GM10248 (cell line): ENCODE measurements at regions of chr11 and their contacts with region 1.

Region 1: GRCh38 chr11:119728651-119729580 is at the start of gene NECTIN1:
- DNase-seq: peak; percentile 92
- CTCF ChIP-seq: peak; percentile 81

Region 2: GRCh38 chr11:119666463-119667131 is 62.3 kb before region 1 on chr11:
- CTCF ChIA-PET with region 1: interaction called, 68 read pairs
- POLR2A ChIA-PET with region 1: no interaction called
- DNase-seq: peak; percentile 86
- CTCF ChIP-seq: peak; percentile 89

Region 3: DNA sequence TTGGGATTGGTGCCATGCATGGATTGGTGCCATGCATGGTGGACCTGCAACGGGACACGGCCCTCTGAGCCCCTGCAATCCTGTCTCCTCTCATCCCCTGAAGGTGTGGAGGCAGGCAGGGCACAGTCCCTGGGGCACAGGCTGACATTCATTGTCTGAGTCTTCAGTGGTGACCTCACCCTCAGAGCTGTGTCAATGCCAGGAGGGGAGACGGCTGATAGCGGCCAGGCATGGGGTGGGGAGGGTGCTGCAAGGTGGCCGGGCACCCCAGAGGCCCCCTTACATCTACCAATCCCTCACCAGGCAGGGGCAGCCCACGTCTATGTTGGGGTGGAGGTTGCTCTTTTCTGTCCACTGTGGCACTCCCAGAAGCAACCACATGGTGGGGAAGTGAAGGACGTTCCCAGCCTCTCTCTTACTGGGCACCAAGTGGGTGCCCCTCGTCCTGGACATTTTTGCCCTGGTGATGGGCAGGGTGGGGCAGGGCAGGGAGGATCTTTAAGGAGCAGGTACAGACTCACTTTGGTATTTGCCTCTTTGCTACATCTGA is 47.5 kb before region 1 on chr11:
- CTCF ChIA-PET with region 1: interaction called, 68 read pairs
- POLR2A ChIA-PET with region 1: interaction called, 3 read pairs
- DNase-seq: no peak
- CTCF ChIP-seq: no peak

Region 4: DNA sequence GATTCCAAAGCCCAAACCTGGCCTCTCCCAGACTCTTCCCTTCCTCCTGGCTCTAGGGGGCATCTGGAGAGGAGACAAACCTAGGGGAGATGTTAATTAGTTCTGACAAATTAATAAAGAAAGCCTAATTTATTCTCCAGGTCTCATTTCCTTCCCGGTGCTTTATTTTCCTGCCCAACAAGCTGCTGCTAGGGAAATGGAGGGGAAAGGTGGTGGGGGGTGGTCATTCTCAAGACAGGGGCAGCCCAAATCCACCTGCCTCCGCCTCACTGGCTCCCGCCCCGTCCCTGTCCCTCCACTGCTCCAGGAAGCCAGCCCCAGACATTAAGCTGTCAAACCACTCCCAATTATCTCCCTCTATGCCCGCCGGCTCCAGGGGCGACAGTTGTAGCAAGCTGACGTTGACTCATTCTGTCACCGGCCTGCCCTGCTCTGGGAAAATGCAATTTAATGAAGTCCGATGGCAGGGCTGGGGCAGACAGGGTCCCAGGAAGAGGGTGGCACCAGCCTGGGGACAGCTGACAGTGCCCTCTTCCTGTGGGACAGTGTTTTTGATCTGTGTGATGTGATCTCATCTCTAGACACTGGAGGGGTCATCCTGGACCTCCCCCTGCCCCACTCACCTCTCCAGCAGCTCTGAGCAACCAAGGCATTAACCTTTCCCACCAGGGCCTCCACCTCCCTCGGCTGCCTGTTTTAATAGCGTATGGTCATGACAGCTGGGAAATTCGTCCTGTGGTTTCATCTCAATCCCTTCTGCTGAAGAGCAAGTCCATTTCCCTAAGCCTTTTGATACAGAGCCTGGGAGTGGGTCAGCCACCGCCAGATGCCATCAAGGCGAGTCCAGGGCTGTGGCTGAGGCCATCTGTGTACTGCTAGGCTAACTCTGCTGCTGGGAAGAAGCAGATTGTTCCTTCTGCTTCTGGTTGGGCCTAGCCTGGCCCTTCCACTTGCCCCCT is 27.0 kb before region 1 on chr11:
- CTCF ChIA-PET with region 1: interaction called, 29 read pairs
- POLR2A ChIA-PET with region 1: no interaction called
- DNase-seq: no peak
- CTCF ChIP-seq: no peak

Region 5: DNA sequence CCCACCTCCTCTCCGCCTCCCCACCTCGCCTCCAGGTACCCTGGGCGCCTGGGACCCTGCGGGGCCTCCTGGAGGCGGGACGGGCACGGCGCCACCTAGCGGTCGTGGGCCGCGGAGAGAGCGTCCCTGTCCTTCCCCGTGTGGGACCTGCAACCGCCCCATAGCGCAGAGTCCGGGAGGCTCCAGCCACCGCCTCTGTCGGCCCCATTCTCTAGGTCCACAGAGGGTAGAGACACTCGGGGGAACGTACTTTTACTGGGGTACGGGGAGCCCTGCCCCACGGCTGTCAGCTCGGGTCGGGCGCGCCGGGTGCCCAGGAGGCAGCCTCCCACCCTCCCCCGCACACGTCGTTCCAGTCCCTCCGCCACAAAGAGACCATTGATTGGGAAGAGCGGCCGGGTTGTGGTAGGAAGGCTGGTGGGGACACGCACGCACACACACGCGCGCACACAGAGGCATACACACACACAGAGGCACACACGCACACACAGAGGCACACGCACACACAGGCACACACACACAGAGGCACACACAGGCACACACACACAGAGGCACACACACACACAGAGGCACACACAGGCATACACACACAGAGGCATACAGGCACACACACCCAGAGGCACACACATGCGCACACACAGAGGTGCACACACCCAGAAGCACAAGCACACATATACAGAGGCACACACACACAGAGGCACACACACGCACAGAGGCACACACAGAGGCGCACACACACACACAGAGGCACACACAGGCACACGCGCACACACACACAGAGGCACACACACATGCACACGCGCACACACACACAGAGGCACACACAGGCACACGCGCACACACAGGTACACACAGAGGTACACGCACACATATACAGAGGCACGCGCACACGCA is 12.7 kb after region 1 on chr11:
- CTCF ChIA-PET with region 1: interaction called, 47 read pairs
- POLR2A ChIA-PET with region 1: interaction called, 6 read pairs
- DNase-seq: peak; percentile 87
- CTCF ChIP-seq: peak; percentile 92